Sigmoid colon (tissue), 7 donors: ENCODE measurements at regions of chr6 and their contacts with region 1.

Region 1: GRCh38 chr6:56370561-56371211 is 123.3 kb upstream of the COL21A1 start:
- DNase-seq: peak; percentile 91
- H3K4me3 ChIP-seq: peak overlapping the region in 1 of 4 donors; percentile 6
- H3K27ac ChIP-seq: peak overlapping the region; percentile 80 to 95 (median 90)
- H3K4me1 ChIP-seq: peaks cover 0 to 96% (median 79%) of the 10 kb centered on the region in 4 donors
- H3K27me3 ChIP-seq: no peaks in the 10 kb centered on the region
- CTCF ChIP-seq: no peak
- EP300 ChIP-seq: peak in 3 of 4 donors; percentile 40 to 87 (median 78)
- POLR2A ChIP-seq: no peak

Region 2: DNA sequence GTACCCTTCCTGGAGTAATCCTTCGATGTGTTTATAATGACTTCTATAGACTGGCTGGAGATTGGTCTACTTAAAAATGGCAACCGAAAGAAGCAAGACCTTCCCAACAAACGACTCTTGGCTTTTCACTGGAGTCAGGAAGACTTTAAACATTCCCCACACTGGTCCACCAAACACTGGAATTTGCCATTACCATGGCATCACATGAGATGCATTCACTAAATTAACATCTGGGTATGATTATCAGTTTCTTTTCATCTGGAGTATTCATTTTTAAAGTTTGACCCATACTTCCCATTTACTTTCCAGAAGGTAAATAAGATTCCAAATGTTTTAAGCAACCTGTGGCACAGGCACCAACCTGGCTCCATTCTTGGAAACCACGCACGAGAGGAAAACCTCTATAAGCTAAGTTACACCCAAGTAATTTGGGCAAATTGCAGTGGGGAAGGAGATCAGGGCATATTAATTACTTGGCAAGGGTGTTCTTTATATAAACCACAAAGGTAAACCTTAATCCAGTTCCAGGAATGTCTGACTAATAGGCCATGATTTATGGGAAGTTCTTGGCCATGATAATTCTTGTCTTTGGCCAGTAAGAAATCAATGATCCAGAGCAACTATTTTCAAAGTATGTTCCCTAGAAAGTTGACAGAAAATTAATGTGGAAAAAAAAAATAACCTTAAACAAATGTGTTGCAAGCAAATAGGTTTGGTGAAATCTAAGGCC is 66.7 kb after region 1 on chr6:
- intact Hi-C with region 1: loop called (anchors 5 kb)
- DNase-seq: no peak
- H3K4me3 ChIP-seq: no peak overlapping the region
- H3K27ac ChIP-seq: peak overlapping the region in 3 of 4 donors; percentile 45 to 59 (median 49)
- H3K4me1 ChIP-seq: peaks cover 0 to 62% (median 23%) of the 10 kb centered on the region in 4 donors
- H3K27me3 ChIP-seq: no peaks in the 10 kb centered on the region
- CTCF ChIP-seq: no peak
- EP300 ChIP-seq: no peak
- POLR2A ChIP-seq: no peak

Region 3: DNA sequence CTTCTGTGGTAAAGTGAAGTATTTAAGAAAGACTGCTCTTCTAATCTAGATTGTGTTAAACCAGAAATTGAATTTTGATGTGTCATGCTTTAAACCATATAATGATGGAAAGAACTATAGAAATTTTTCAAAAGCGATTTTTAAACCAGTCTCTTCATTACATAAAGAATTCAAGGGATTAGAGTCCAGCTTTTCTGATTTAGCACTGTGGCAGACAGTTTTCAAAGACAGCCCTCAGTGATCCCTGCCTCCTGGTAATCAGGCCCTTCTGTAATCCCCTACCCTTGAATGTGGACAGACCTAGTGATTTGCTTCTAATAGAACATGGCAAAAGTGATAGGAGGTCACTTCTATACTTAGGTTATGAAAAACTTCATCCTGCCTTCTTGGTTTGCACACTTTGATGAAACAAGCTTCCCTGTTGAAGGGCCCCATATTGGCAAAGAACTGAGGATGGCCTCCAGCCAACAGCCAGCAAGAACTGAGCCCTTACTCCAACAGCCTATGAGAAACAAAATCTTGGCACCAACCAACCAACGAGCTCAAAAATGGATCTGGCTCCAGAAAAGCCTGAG is 80.6 kb after region 1 on chr6:
- intact Hi-C with region 1: loop called (anchors 5 kb)
- DNase-seq: peak; percentile 83
- H3K4me3 ChIP-seq: no peak overlapping the region
- H3K27ac ChIP-seq: peak overlapping the region; percentile 21 to 79 (median 60)
- H3K4me1 ChIP-seq: peaks cover 0 to 49% (median 26%) of the 10 kb centered on the region in 4 donors
- H3K27me3 ChIP-seq: no peaks in the 10 kb centered on the region
- CTCF ChIP-seq: no peak
- EP300 ChIP-seq: no peak
- POLR2A ChIP-seq: no peak

Region 4: GRCh38 chr6:56551409-56552120 is 180.9 kb after region 1 on chr6:
- intact Hi-C with region 1: loop called (anchors 2 kb)
- DNase-seq: peak; percentile 61
- H3K4me3 ChIP-seq: no peak overlapping the region
- H3K27ac ChIP-seq: peak overlapping the region; percentile 35 to 96 (median 80)
- H3K4me1 ChIP-seq: peaks cover 0 to 88% (median 75%) of the 10 kb centered on the region in 4 donors
- H3K27me3 ChIP-seq: no peaks in the 10 kb centered on the region
- CTCF ChIP-seq: no peak
- EP300 ChIP-seq: no peak
- POLR2A ChIP-seq: no peak